Mammary epithelial cell (primary cell): ENCODE measurements at regions of chr20 and their contacts with region 1.

Region 1: DNA sequence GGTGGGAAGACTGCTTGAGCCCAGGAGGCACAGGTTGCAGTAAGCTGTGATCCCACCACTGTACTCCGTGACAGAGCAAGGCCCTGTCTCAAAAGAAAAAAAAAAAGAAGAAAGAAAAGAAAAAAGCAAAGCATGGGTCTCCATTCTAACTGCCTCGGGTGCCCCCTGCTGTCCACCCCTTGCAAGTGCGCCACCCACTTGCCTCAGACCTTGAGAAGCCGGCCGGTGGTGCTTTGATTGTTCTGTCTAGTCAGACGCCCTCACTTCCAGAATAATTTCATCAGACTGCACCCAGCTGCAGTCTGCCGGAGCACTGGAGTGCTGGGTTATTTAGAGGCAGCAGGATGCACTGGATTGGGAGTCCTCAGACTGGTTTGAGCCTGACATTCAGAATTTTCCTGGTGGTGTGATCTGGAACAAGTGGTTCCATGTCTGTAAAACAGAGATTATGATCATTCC is 17.6 kb upstream of the TM9SF4 start:
- DNase-seq: peak; percentile 57
- H3K4me3 ChIP-seq: no peak overlapping the region
- H3K27ac ChIP-seq: no peak overlapping the region
- H3K4me1 ChIP-seq: no peaks in the 10 kb centered on the region
- H3K27me3 ChIP-seq: no peaks in the 10 kb centered on the region
- CTCF ChIP-seq: peak; percentile 92 to 95

Region 2: GRCh38 chr20:31822421-31823330 is 269.2 kb before region 1 on chr20:
- CTCF ChIA-PET with region 1: no interaction called
- dilution Hi-C with region 1: no loop called
- in situ Hi-C with region 1: no loop called
- intact Hi-C with region 1: loop called (anchors 1 kb)
- DNase-seq: peak; percentile 29
- H3K4me3 ChIP-seq: no peak overlapping the region
- H3K27ac ChIP-seq: no peak overlapping the region
- H3K4me1 ChIP-seq: no peaks in the 10 kb centered on the region
- H3K27me3 ChIP-seq: no peaks in the 10 kb centered on the region
- CTCF ChIP-seq: peak; percentile 78 to 96

Region 3: GRCh38 chr20:31943052-31943471 is 148.9 kb before region 1 on chr20:
- CTCF ChIA-PET with region 1: no interaction called
- dilution Hi-C with region 1: no loop called
- in situ Hi-C with region 1: no loop called
- intact Hi-C with region 1: no loop called
- DNase-seq: no peak
- H3K4me3 ChIP-seq: no peak overlapping the region
- H3K27ac ChIP-seq: no peak overlapping the region
- H3K4me1 ChIP-seq: peaks cover 5% of the 10 kb centered on the region
- H3K27me3 ChIP-seq: no peaks in the 10 kb centered on the region
- CTCF ChIP-seq: no peak

Region 4: GRCh38 chr20:32031007-32031958 is 60.6 kb before region 1 on chr20:
- CTCF ChIA-PET with region 1: no interaction called
- dilution Hi-C with region 1: loop called (anchors 10 kb)
- in situ Hi-C with region 1: no loop called
- intact Hi-C with region 1: loop called (anchors 1 kb)
- DNase-seq: peak; percentile 66
- H3K4me3 ChIP-seq: peak overlapping the region in 1 of 3 experiments; percentile 23
- H3K27ac ChIP-seq: no peak overlapping the region
- H3K4me1 ChIP-seq: peaks cover 5% of the 10 kb centered on the region
- H3K27me3 ChIP-seq: peaks cover 3% of the 10 kb centered on the region
- CTCF ChIP-seq: peak; percentile 72 to 88

Region 5: DNA sequence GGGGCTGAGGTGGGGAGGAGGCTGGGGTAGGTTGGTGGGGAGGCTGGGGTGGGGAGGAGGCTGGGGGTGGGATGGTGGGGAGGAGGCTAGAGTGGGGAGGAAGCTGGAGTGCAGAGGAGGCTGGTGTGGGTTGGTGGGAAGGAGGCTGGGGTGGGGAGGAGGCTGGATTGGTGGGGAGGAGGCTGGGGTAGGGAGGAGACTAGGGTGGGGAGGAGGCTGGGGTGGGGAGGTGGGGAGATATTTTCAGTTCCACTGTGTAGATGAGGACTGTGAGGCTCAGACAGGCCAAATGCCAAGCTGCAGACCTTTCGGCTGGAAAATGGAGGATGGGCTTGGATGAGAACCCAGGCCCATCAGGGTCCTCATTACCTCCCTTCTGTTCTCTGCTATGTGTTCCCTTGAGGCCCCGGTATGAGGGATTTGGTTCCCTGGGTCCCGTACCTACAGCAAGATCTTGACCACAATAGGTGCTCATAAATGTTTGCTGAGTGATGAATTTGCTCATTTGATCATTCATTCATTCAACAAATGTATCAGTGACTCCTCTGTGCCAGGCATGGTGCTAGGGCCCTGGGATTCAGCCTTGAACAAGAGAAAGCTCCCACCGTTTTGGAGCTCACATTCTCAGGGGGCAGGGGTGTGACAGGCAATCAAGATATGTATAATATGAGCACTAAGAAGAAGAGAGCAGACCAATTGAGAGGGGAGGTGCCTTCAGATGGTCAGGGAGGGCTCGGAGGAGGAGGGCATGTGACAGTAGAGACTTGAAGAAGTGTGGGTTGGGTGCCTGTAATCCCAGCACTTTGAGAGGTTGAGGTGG is 529.4 kb after region 1 on chr20:
- CTCF ChIA-PET with region 1: no interaction called
- dilution Hi-C with region 1: loop called (anchors 5 kb)
- in situ Hi-C with region 1: no loop called
- intact Hi-C with region 1: no loop called
- DNase-seq: no peak
- H3K4me3 ChIP-seq: no peak overlapping the region
- H3K27ac ChIP-seq: no peak overlapping the region
- H3K4me1 ChIP-seq: no peaks in the 10 kb centered on the region
- H3K27me3 ChIP-seq: peaks cover 2% of the 10 kb centered on the region
- CTCF ChIP-seq: no peak